ENCODE measurements at regions of chr2 and their contacts with region 1.

Region 1: GRCh38 chr2:10832203-10832936 is 19.8 kb upstream of the PDIA6 start:
- DNase-seq: peak; percentile 12
- ATAC-seq: peak; percentile 90
- H3K4me3 ChIP-seq: no peak overlapping the region
- H3K27ac ChIP-seq: no peak overlapping the region
- H3K4me1 ChIP-seq: no peaks in the 10 kb centered on the region
- H3K27me3 ChIP-seq: no peaks in the 10 kb centered on the region; a peak in 3 of 4 replicates
- CTCF ChIP-seq: peak; percentile 91 to 97 (median 93); a peak in 5 of 6 replicates
- EP300 ChIP-seq: no peak
- POLR2A ChIP-seq: no peak
- RAD21 ChIP-seq: peak; percentile 90

Region 2: DNA sequence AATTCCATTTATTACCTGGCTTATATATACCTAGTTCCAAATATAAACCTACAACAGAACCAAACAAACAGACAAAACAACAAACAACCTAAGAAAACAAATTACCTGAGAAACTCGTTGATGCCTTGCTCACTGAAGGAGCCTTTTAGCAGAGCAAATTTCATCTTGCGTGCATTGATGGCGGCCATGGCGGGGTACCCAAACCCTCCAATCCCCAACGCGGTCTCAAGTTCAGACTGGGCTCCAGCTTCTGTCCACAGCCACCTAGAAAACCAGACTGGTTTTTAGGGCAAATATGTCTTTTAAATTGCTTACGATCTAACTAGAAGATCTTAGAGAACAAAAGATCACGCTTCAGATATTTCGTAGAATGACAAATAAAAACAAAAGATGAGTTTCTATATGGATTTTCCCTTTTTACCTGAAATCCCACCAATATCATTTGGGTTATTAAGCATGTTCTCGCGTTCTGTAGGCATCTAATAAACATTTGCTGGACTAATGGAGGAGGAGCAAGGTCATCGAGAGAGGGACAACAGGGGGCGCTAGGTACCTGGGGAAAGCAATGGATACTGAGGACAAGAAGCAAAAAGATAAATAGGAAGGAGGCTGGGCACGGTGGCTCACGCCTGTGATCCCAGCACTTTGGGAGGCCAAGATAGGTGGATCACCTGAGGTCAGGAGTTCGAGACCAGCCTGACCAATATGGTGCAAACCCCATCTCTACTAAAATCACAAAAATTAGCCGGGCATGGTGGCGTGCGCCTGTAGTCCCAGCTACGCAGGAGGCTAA is 45.0 kb before region 1 on chr2:
- CTCF ChIA-PET with region 1: interaction called, 10 read pairs
- POLR2A ChIA-PET with region 1: interaction called, 5 read pairs
- RAD21 ChIA-PET with region 1: interaction called, 3 read pairs
- SMC1A ChIA-PET with region 1: interaction called, 3 read pairs
- in situ Hi-C with region 1: no loop called
- intact Hi-C with region 1: no loop called
- DNase-seq: no peak
- ATAC-seq: no peak
- H3K4me3 ChIP-seq: no peak overlapping the region
- H3K27ac ChIP-seq: no peak overlapping the region
- H3K4me1 ChIP-seq: peaks cover 12% of the 10 kb centered on the region
- H3K27me3 ChIP-seq: no peaks in the 10 kb centered on the region
- CTCF ChIP-seq: peak; percentile 32 to 50 (median 45)
- EP300 ChIP-seq: no peak
- POLR2A ChIP-seq: no peak
- RAD21 ChIP-seq: peak; percentile 59

Region 3: DNA sequence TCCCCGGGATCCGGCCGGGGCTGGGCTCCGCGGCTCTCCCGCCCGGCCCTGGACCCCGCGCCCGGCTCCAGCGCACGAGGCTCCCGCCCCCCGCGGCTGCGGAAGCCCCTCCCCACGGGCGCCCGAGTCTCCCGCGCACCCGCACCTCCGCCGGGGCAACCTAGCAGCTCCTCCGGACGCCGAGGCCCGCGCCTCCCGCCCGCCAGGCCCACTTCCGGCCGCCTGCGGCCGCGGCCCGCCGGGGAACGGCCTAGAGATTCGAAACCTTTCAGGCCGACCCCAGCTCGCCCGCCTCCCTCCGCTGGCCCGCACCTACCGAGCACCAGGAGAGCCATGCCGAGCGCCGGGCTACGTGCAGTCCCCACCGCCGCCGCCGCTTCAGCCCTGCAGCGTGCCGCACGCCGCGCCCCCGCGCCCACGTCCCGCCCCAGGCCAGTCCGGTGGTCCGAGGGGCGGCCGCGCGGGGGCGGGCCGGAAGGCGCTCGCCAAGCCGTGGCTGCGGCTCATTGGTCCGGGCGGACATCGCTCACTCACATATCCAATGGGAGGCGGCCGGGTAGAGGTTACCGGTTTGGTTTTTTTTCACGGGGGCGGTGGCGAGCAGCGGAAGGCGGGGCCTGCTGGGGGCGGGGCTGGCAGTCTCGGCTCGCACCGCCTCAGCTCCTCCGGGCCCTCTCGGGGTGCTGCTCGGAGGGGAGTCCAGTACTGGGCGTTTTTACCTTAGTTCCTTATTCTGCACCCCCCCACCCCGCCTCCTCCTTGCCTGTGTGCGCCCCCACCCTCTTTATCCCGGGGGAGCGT is 19.8 kb before region 1 on chr2 and contains the start of gene PDIA6:
- CTCF ChIA-PET with region 1: interaction called, 10 read pairs
- POLR2A ChIA-PET with region 1: no interaction called
- RAD21 ChIA-PET with region 1: interaction called, 4 read pairs
- SMC1A ChIA-PET with region 1: no interaction called
- in situ Hi-C with region 1: no loop called
- intact Hi-C with region 1: no loop called
- DNase-seq: peak; percentile 81
- ATAC-seq: peak; percentile 94
- H3K4me3 ChIP-seq: peak within 1 kb of the TSS; percentile 90
- H3K27ac ChIP-seq: peak within 1 kb of the TSS; percentile 85
- H3K4me1 ChIP-seq: peaks cover 3% of the 10 kb centered on the region
- H3K27me3 ChIP-seq: no peaks in the 10 kb centered on the region; a peak in 2 of 4 replicates
- CTCF ChIP-seq: no peak
- EP300 ChIP-seq: no peak
- POLR2A ChIP-seq: peak; percentile 86
- RAD21 ChIP-seq: no peak
- polyA plus RNA-seq, gene PDIA6: 180 to 234 TPM

Region 4: DNA sequence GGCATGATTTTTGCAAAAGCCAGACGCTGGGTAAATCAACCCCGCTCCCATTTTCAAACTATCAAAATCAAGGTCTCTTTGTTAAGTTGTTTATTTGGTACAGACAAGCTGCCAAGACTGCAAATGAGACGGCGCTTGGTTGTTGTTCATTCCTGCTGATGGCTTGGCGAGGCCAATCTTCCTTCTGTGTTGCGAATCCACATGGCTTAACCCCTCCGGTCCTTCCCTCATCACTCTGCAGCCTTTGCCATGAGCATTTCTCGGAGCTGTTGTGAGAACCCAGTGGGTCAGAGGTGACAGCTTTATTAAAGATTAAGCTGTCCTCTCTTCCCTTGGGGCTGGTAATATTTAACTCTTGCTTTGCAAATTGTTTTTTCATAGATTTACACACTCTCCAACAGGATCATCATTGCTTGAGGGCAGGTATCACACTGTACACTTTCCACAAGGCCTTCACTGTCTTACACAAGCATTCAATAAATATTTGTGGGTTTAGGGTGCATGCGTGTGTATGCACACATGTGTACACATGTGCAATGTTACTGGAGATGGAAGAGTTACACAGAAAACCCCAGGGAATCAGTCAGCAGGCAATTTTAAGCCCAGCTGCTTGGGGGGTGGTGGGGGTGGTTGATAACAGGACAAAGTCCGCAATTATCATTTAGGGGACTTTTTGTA is 51.6 kb after region 1 on chr2:
- CTCF ChIA-PET with region 1: interaction called, 10 read pairs
- POLR2A ChIA-PET with region 1: no interaction called
- RAD21 ChIA-PET with region 1: no interaction called
- SMC1A ChIA-PET with region 1: interaction called, 4 read pairs
- in situ Hi-C with region 1: no loop called
- intact Hi-C with region 1: no loop called
- DNase-seq: no peak
- ATAC-seq: no peak; the same call in 2 of the 3 replicates
- H3K4me3 ChIP-seq: no peak overlapping the region
- H3K27ac ChIP-seq: no peak overlapping the region
- H3K4me1 ChIP-seq: no peaks in the 10 kb centered on the region; the same call in 1 of the 2 replicates
- H3K27me3 ChIP-seq: peaks cover 0 to 6% of the 10 kb centered on the region in 2 experiments; a peak in 2 of 4 replicates
- CTCF ChIP-seq: no peak
- EP300 ChIP-seq: no peak
- POLR2A ChIP-seq: no peak
- RAD21 ChIP-seq: no peak

Region 5: DNA sequence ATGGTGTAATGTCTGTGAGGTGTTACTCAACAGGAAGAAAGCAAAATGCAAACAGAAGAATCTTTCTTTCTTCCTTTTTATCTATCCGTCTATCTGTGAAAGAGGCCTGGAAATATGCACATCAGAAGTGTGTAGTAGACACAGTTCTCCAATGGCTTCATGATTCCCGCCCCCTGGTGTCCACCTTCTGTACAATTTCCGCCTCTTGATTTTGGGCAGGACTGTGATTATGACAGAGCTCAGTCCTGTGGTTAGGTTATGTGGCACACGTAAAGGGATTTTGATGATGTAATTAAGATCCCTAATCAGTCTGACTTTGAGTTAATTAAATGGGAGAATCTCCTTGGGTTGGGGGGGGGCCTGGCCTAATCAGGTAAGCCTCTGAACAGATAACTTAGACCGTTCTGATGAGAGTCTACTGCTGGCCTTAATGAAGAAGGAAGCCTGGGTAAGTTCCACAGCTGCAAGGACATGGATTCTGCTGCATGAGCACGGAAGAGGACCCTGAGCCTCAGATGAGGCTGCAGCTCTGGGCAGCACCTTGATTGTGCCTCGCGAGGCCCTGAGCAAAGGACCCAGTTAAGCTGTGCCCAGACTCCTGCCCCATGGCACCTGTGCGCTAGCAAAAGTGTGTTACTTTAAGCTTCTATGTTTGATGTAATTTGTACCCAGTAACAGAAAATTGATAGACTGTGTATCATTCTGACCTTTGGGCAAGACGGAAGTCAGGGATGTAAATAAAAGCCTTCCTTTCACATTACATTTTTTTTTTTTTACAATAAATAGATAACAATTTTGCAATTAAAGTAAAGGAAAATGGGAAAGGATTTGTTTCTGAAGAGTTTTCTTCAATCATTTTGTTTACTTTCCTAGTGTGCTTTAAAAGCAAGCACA is 68.1 kb after region 1 on chr2:
- CTCF ChIA-PET with region 1: interaction called, 87 read pairs
- POLR2A ChIA-PET with region 1: no interaction called
- RAD21 ChIA-PET with region 1: interaction called, 14 read pairs
- SMC1A ChIA-PET with region 1: interaction called, 25 read pairs
- in situ Hi-C with region 1: loop called (anchors 5 kb)
- intact Hi-C with region 1: loop called (anchors 1 kb)
- DNase-seq: no peak
- ATAC-seq: peak; percentile 83
- H3K4me3 ChIP-seq: no peak overlapping the region
- H3K27ac ChIP-seq: no peak overlapping the region
- H3K4me1 ChIP-seq: no peaks in the 10 kb centered on the region
- H3K27me3 ChIP-seq: peaks cover 0 to 3% of the 10 kb centered on the region in 2 experiments; a peak in 1 of 4 replicates
- CTCF ChIP-seq: peak; percentile 39 to 49 (median 40); a peak in 5 of 6 replicates
- EP300 ChIP-seq: no peak
- POLR2A ChIP-seq: no peak
- RAD21 ChIP-seq: peak; percentile 45

Region 6: DNA sequence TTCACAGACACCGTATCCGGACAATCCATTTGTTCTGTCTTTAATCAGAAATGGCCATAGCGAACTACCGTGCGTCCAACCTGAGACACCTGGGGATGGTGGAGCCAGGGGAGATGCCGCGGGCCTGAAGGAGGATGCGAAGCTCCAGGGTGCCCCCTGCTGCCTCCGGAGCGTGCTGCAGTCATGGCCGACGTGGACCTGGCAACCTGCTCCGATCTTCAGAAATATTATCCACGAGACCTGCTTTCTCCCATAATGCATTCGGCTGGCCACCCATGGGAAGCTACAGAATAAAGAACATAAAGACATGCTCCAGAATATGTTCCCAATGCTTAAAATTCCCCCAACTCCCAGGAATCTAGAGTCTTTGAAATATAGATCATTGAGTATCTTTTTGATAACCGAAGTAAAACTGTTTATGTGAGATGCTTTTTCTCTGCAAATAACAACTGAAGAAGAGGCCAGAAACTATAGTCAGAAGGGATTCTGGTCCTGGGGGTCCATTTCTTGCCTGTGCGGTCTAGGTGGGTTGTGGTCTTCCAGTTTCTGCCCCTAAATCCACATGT is 292.2 kb after region 1 on chr2:
- CTCF ChIA-PET with region 1: interaction called, 42 read pairs
- POLR2A ChIA-PET with region 1: no interaction called
- RAD21 ChIA-PET with region 1: interaction called, 20 read pairs
- SMC1A ChIA-PET with region 1: interaction called, 15 read pairs
- in situ Hi-C with region 1: loop called (anchors 5 kb)
- intact Hi-C with region 1: loop called (anchors 1 kb)
- DNase-seq: no peak
- ATAC-seq: peak; percentile 90
- H3K4me3 ChIP-seq: no peak overlapping the region
- H3K27ac ChIP-seq: no peak overlapping the region
- H3K4me1 ChIP-seq: no peaks in the 10 kb centered on the region
- H3K27me3 ChIP-seq: no peaks in the 10 kb centered on the region; a peak in 2 of 4 replicates
- CTCF ChIP-seq: peak; percentile 73 to 83 (median 81)
- EP300 ChIP-seq: no peak
- POLR2A ChIP-seq: no peak
- RAD21 ChIP-seq: peak; percentile 81

Region 7: DNA sequence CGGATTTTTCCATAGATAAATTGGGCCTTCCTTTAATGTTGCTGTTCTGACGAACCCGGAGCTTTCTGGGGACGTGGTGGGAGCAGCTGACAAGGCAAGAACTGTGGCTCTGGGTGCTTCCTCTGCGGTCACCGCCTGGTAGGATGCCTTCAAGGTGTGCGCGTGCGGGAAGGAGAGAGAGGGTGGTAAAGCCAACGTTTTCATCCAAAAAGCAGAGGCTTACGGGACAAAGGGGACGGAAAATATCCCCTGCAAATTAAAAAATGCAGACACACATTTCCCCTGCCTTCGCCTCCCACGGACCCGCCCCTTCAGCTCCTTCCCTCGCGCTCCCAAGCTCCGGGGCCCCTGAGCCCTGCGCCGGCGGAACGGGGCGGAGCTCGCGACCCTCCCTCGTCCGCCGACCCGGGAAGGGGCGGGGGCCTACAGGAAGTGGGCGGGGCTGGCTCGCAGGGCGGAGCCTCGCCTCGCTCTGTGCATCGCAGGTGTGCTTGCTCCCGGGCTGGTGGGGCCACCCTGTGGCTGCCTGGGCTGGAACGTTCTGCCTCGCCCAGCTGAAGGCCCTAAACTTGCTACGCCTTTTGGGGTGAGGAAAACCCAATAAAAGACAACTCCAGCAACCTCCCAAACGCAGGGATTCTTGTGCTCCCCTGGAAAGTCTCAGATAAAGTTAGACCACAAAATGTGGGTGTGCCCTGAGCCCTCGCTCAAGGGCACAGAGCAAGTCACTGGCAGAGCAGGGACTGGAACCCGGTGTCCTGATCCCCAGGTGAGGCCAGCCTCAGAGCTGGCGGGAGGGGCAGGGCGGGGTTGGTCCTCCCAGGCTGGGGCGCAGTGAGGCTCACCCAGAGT is 297.5 kb after region 1 on chr2:
- CTCF ChIA-PET with region 1: interaction called, 42 read pairs
- POLR2A ChIA-PET with region 1: no interaction called
- RAD21 ChIA-PET with region 1: interaction called, 20 read pairs
- SMC1A ChIA-PET with region 1: interaction called, 15 read pairs
- in situ Hi-C with region 1: no loop called
- intact Hi-C with region 1: no loop called
- DNase-seq: no peak
- ATAC-seq: peak; percentile 76
- H3K4me3 ChIP-seq: peak overlapping the region; percentile 54; the same call in 1 of the 2 replicates
- H3K27ac ChIP-seq: no peak overlapping the region
- H3K4me1 ChIP-seq: peaks cover 8% of the 10 kb centered on the region
- H3K27me3 ChIP-seq: no peaks in the 10 kb centered on the region; a peak in 3 of 4 replicates
- CTCF ChIP-seq: peak; percentile 33 to 50 (median 43); a peak in 5 of 6 replicates
- EP300 ChIP-seq: no peak
- POLR2A ChIP-seq: peak; percentile 19; the same call in 1 of the 2 replicates
- RAD21 ChIP-seq: peak; percentile 53

Region 8: GRCh38 chr2:12320991-12321641 is 1488.7 kb after region 1 on chr2:
- CTCF ChIA-PET with region 1: no interaction called
- POLR2A ChIA-PET with region 1: no interaction called
- RAD21 ChIA-PET with region 1: no interaction called
- SMC1A ChIA-PET with region 1: no interaction called
- in situ Hi-C with region 1: no loop called
- intact Hi-C with region 1: no loop called
- DNase-seq: no peak
- ATAC-seq: no peak
- H3K4me3 ChIP-seq: no peak overlapping the region
- H3K27ac ChIP-seq: no peak overlapping the region
- H3K4me1 ChIP-seq: no peaks in the 10 kb centered on the region
- H3K27me3 ChIP-seq: no peaks in the 10 kb centered on the region
- CTCF ChIP-seq: no peak
- EP300 ChIP-seq: no peak
- POLR2A ChIP-seq: no peak
- RAD21 ChIP-seq: no peak

Measured in GM12878 (cell line).